ENCODE measurements at regions of chr2 and their contacts with region 1.

Region 1: GRCh38 chr2:152573168-152573567 is 144.1 kb downstream of the PRPF40A start:
- DNase-seq: peak; percentile 75
- H3K4me3 Mint-ChIP-seq: no peak overlapping the region
- H3K27ac Mint-ChIP-seq: no peak overlapping the region
- H3K4me1 Mint-ChIP-seq: peaks cover 7% of the 10 kb centered on the region
- H3K27me3 Mint-ChIP-seq: peaks cover 9% of the 10 kb centered on the region

Region 2: DNA sequence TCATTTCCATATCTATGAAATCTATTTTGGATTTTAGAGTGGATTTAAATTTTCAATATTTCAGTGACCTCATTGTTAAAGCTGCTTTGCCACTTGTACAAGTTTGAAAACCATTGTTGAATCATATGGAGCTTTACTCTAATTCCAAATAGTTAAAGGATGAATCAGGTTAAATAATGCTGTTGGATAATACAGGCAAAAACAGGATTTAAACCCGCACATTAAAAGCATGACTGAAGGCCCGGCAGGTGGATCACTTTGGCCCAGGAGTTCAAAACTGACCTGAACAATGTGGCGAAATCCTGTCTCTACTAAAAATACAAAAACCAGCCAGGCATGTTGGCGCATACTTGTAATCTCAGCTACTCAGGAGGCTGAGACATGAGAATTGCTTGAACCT is 1095.2 kb before region 1 on chr2:
- CTCF ChIA-PET with region 1: no interaction called
- intact Hi-C with region 1: loop called (anchors 10 kb)
- DNase-seq: no peak
- H3K4me3 Mint-ChIP-seq: no peak overlapping the region
- H3K27ac Mint-ChIP-seq: no peak overlapping the region
- H3K4me1 Mint-ChIP-seq: peaks cover 18% of the 10 kb centered on the region
- H3K27me3 Mint-ChIP-seq: no peaks in the 10 kb centered on the region

Region 3: GRCh38 chr2:152415231-152415642 is 157.9 kb before region 1 on chr2:
- CTCF ChIA-PET with region 1: no interaction called
- intact Hi-C with region 1: loop called (anchors 1 kb)
- DNase-seq: peak; percentile 60
- H3K4me3 Mint-ChIP-seq: no peak overlapping the region
- H3K27ac Mint-ChIP-seq: peak overlapping the region; percentile 78
- H3K4me1 Mint-ChIP-seq: peaks cover 40% of the 10 kb centered on the region
- H3K27me3 Mint-ChIP-seq: peaks cover 29% of the 10 kb centered on the region

Region 4: DNA sequence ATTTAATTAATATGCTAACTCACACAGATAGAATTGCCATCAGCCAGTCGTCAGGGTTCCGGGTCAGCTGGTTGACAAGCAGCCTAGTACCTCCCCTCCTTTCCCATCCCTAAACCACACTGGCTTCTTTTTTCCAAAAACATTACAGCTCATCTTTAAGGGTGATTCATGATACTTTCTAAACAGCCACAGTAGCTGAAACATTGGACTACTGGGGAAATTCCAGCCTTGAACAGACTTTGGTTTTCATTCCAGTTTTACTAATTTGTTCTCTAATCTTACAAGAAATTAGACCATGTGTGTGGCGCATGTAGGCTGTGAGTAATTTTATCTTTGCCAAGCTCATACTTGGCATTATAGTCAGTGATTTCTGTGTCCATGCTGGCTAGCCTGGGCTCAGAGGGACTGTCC is 127.4 kb before region 1 on chr2:
- CTCF ChIA-PET with region 1: no interaction called
- intact Hi-C with region 1: loop called (anchors 1 kb)
- DNase-seq: peak; percentile 26
- H3K4me3 Mint-ChIP-seq: no peak overlapping the region
- H3K27ac Mint-ChIP-seq: no peak overlapping the region
- H3K4me1 Mint-ChIP-seq: peaks cover 19% of the 10 kb centered on the region
- H3K27me3 Mint-ChIP-seq: peaks cover 24% of the 10 kb centered on the region

Region 5: DNA sequence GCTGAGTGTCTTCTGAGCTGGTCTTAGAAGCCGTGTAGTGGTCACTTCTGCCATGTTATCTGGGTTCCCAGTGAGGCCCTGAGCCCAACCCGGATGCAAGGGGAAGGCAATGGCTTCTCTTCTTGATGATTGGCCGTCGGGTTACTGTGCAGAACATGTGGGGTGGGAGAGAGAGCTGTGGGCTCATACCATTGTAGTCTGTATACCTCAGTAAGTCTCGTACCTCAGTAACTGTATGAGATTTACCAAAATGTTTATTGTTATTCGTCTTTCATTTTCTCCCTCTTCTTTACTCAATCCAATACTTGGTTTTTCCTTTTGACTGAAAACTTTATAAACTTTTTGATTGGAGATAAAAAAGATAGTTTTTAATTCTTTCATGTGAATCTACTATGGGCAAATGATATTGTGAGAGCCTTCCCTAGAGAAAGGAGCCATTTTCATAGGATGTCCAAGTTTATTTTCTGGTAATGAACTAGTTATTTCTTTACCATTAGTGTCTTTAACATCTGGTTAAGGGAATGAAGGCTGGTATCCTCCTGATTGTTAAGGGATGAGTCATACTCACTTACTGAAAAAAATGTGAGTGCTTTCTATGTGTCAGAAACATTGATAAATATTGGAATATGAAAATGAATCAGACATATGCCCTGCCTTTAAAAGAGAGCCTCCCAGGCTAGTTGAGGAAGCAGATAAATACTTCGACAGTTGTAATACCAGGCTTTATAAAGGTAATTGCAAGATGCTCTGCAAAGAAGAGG is 14.2 kb after region 1 on chr2:
- CTCF ChIA-PET with region 1: no interaction called
- intact Hi-C with region 1: loop called (anchors 1 kb)
- DNase-seq: no peak
- H3K4me3 Mint-ChIP-seq: no peak overlapping the region
- H3K27ac Mint-ChIP-seq: no peak overlapping the region
- H3K4me1 Mint-ChIP-seq: peaks cover 9% of the 10 kb centered on the region
- H3K27me3 Mint-ChIP-seq: peaks cover 14% of the 10 kb centered on the region

Region 6: GRCh38 chr2:152594022-152594766 is 21.0 kb after region 1 on chr2:
- CTCF ChIA-PET with region 1: no interaction called
- intact Hi-C with region 1: loop called (anchors 1 kb)
- DNase-seq: peak; percentile 43
- H3K4me3 Mint-ChIP-seq: no peak overlapping the region
- H3K27ac Mint-ChIP-seq: no peak overlapping the region
- H3K4me1 Mint-ChIP-seq: peaks cover 9% of the 10 kb centered on the region
- H3K27me3 Mint-ChIP-seq: no peaks in the 10 kb centered on the region

Measured in activated naive CD4-positive, alpha-beta T cell treated with anti-CD3 and anti-CD28 coated beads for 36 hours (primary cell).